Pancreas (tissue), 10 donors: ENCODE measurements at regions of chr2 and their contacts with region 1.

Region 1: GRCh38 chr2:29130295-29130694 is 15.1 kb downstream of the CLIP4 start:
- DNase-seq: peak in 1 of 6 donors; percentile 19
- ATAC-seq: peak; percentile 64 to 93 (median 82)
- H3K4me3 ChIP-seq: no peak overlapping the region
- H3K27ac ChIP-seq: no peak overlapping the region
- H3K4me1 ChIP-seq: peaks cover 0 to 6% (median 0%) of the 10 kb centered on the region in 3 donors
- H3K27me3 ChIP-seq: no peaks in the 10 kb centered on the region
- CTCF ChIP-seq: no peak

Region 2: DNA sequence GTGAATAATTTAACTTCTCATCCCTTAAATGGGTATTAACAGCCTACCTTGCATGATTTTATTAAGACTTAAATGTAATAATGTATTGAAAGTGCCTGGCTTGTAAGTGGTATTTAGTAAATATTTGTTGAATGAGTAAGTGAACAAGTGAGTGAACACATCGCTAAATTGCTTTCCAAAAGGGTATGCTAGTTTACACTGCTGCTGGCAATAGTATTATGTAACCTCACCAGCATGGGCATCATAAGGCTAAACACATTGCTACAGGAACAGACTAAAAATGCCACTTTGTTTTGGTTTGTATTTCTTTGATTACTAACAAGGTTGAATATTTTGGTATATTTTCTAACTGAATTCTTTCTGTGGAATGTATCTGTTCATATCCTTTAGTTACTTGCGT is 226.0 kb before region 1 on chr2:
- intact Hi-C with region 1: no loop called
- DNase-seq: no peak
- ATAC-seq: peak in 1 of 4 donors; percentile 51
- H3K4me3 ChIP-seq: no peak overlapping the region
- H3K27ac ChIP-seq: no peak overlapping the region
- H3K4me1 ChIP-seq: peaks cover 0 to 9% (median 5%) of the 10 kb centered on the region in 3 donors
- H3K27me3 ChIP-seq: no peaks in the 10 kb centered on the region
- CTCF ChIP-seq: no peak

Region 3: DNA sequence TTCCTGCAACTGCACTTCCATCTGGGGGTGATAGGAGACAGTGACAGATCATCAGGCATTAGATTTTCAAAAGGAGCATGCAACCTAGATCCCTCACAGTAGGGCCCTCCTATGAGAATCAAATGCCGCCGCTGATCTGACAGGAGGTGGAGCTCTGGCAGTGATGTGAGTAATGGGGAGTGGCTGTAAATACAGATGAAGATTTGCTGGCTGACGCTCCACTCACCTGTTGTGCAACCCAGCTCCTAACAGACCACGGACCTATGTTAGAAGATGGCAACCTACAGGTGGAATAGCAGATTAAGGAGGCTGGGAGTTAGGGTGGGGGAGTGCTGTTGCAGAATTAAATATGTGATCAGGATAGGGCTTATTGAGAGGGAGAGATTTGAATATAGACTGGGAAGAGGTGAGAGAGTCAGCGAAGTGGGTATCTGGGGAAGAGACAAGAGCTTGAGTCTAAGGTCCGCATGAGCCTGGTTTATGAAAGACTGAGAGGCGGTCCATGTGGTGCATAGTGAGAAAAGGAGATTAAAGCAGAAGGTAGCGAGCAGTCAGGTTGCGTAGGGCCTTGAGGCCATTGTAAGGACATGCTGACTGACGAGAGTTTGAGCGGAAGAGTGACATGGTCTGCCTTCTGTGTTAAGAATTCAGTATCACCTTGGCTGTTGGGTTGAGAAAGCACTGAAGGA is 180.5 kb before region 1 on chr2:
- intact Hi-C with region 1: loop called in 1 of 3 experiments (anchors 10 kb)
- DNase-seq: no peak
- ATAC-seq: no peak
- H3K4me3 ChIP-seq: no peak overlapping the region
- H3K27ac ChIP-seq: no peak overlapping the region
- H3K4me1 ChIP-seq: no peaks in the 10 kb centered on the region
- H3K27me3 ChIP-seq: no peaks in the 10 kb centered on the region
- CTCF ChIP-seq: no peak

Region 4: DNA sequence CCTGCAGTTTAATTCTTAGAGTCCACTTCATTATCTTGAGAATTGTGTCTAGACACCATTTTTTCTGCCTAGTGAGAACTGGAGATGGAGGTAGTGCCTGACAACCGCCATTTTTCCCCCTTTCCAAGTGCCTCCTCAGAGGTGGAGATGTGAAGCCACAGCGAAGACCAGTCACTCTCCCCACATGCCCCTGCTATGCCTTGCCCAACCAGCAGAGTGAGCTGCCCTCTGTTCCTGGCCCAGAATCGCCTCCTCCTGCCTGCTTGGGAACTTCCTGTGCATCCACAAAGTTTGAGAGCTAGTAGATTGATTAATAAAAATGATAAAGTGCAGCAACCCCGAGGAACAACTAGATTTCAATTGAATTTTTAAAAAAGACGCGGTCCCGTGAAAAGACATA is 108.2 kb after region 1 on chr2:
- intact Hi-C with region 1: no loop called
- DNase-seq: peak in 4 of 6 donors; percentile 23 to 70 (median 42)
- ATAC-seq: peak; percentile 63 to 87 (median 77)
- H3K4me3 ChIP-seq: no peak overlapping the region
- H3K27ac ChIP-seq: no peak overlapping the region
- H3K4me1 ChIP-seq: no peaks in the 10 kb centered on the region
- H3K27me3 ChIP-seq: no peaks in the 10 kb centered on the region
- CTCF ChIP-seq: peak; percentile 31 to 66 (median 49)